Activated CD8-positive, alpha-beta T cell treated with anti-CD3 and anti-CD28 coated beads, Interleukin-2, amount 10 ng/mL, durations not matched to agents 7 days and 5 days (primary cell): ENCODE measurements at regions of chr3 and their contacts with region 1.

Region 1: DNA sequence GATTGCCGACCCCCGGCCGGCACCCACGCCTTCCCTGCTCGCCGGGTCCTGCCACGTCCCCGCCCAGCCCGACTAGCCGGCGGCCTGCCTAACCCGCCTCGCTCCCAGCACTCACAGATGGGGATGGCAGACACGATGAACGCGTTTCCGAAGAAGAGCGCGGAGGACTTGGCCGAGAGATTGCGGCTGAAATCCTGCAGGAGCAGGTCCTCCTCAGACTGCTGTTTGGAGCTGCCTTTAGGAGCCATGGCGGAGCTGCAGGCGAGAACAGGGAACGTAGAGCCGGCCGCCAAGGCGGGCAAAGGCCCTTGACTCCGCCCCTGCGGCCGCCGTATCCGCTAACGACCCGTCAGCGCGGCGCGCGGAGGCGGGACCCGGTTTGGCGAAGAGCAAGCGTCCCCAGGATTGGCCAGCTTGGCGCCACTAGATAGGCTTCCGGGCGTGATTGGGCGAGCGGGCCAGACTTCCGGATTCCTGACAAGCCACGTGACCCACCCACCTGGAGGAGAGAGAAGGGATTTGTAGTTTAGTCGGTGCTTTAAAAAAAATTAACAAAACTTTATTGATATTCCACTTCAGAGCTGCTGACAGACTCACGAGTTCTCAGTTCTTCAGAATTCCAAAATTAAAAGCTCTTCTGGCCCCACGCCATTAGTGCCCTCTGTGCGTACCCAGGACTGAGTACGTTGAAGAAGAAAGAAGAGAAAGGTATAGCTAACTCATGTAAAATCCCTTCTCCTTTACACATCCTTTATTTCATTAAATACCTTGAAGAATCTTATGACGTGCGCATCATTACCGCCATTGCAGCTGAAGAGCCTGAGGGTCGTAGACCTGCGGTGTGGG is at the start of gene SSR3:
- DNase-seq: peak; percentile 99
- ATAC-seq: peak; percentile 100
- H3K4me3 Mint-ChIP-seq: peak within 1 kb of the TSS; percentile 97
- H3K27ac Mint-ChIP-seq: peak within 1 kb of the TSS; percentile 93
- H3K4me1 Mint-ChIP-seq: peaks cover 49% of the 10 kb centered on the region
- H3K27me3 Mint-ChIP-seq: no peaks in the 10 kb centered on the region
- total RNA-seq, gene SSR3: 133 to 147 TPM

Region 2: GRCh38 chr3:156542715-156543555 is 12.1 kb before region 1 on chr3:
- CTCF ChIA-PET with region 1: interaction called, 24 read pairs
- POLR2A ChIA-PET with region 1: interaction called, 7 read pairs
- DNase-seq: no peak
- ATAC-seq: no peak
- H3K4me3 Mint-ChIP-seq: no peak overlapping the region
- H3K27ac Mint-ChIP-seq: peak overlapping the region; percentile 3
- H3K4me1 Mint-ChIP-seq: peaks cover 21% of the 10 kb centered on the region
- H3K27me3 Mint-ChIP-seq: no peaks in the 10 kb centered on the region

Region 3: GRCh38 chr3:156581033-156581432 is 26.0 kb after region 1 on chr3:
- CTCF ChIA-PET with region 1: no interaction called
- POLR2A ChIA-PET with region 1: no interaction called
- DNase-seq: no peak
- ATAC-seq: no peak
- H3K4me3 Mint-ChIP-seq: no peak overlapping the region
- H3K27ac Mint-ChIP-seq: no peak overlapping the region
- H3K4me1 Mint-ChIP-seq: peaks cover 9% of the 10 kb centered on the region
- H3K27me3 Mint-ChIP-seq: peaks cover 13% of the 10 kb centered on the region

Region 4: DNA sequence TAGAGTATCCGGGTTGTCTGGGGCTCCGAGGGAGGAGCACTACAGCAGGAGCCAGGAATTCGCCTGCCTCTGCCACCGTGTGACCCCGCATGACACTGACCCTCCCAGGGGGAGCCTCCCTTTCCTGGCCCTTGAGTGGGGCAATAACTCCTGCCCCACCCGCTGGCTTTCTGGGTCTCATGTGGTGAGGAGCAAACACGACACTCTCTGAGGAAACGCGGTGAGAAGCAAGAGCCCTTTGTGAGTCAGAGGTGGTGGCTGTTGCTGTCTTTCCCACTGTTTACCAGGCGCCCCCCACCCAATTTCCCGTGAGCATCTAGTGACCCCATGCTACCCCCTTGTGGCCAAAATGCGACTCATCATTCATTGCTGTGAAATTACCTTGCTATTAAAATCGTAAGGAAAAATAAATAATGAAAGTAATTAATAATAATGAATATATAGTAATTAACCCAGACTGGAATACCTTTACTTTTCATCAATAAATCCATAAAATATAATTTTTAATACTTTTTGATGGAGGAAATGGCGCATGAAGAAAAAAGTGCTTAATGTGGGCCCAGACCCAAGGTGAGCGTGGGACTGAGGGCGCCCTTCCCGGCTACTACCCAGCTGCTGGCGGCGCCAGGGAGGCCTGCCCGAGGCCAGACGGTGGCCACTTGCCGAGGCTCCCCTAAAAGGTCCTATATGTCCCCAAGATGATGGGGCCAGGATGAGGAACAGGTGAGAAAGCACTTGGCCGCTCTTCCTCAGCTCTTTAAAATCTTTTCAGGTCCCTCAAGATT is 575.6 kb after region 1 on chr3:
- CTCF ChIA-PET with region 1: interaction called, 10 read pairs
- POLR2A ChIA-PET with region 1: no interaction called
- DNase-seq: peak; percentile 78
- ATAC-seq: peak; percentile 41
- H3K4me3 Mint-ChIP-seq: peak overlapping the region; percentile 50
- H3K27ac Mint-ChIP-seq: peak overlapping the region; percentile 92
- H3K4me1 Mint-ChIP-seq: peaks cover 89% of the 10 kb centered on the region
- H3K27me3 Mint-ChIP-seq: no peaks in the 10 kb centered on the region

Region 5: DNA sequence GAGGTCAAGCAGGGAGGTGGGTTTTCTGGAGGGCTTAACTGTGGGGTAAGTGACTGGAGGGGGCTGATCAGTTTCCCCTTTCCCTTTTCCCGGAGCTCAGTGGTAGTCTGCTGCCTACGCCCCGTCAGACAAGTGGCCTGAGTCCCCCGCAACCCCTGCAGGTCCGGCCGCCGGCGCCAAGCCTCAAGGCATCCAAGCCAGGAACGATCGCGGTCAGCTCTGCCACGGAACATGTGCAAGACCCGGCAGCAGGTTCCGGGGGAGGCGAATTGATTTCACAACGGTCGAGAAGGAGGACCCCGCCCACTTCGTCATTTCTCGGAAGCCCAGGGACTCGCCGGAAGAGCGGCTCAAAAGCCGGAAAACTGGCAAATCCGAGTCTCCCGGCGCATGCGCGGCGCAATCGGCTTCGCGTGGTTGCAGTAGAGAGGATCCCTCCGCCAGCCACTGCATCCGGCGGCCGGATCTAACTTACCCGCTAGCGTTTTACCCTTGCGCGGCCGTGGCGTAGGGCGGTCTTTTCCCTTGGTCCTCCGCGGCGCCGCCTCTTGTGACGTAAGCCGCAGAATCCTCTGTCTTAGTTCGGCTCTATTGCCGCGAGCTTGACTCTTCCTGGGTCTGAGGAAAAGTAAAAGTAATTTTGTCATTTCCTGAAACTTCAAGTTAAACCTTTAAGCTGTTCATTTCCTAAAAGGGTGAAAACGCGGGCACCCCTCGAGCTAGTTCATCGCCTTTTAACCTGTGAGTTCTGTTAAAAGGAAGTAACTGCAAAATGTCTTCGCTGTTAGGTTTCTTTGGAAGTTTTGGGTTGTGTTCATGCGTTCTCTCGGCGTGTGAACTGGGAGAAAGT is 619.8 kb after region 1 on chr3:
- CTCF ChIA-PET with region 1: interaction called, 4 read pairs
- POLR2A ChIA-PET with region 1: interaction called, 10 read pairs
- DNase-seq: peak; percentile 98
- ATAC-seq: peak; percentile 93
- H3K4me3 Mint-ChIP-seq: peak overlapping the region; percentile 96
- H3K27ac Mint-ChIP-seq: peak overlapping the region; percentile 98
- H3K4me1 Mint-ChIP-seq: peaks cover 30% of the 10 kb centered on the region
- H3K27me3 Mint-ChIP-seq: no peaks in the 10 kb centered on the region